ENCODE measurements at regions of chr3 and their contacts with region 1.

Region 1: GRCh38 chr3:124163689-124164088 is 171.8 kb upstream of the ROPN1 start:
- DNase-seq: no peak

Region 2: DNA sequence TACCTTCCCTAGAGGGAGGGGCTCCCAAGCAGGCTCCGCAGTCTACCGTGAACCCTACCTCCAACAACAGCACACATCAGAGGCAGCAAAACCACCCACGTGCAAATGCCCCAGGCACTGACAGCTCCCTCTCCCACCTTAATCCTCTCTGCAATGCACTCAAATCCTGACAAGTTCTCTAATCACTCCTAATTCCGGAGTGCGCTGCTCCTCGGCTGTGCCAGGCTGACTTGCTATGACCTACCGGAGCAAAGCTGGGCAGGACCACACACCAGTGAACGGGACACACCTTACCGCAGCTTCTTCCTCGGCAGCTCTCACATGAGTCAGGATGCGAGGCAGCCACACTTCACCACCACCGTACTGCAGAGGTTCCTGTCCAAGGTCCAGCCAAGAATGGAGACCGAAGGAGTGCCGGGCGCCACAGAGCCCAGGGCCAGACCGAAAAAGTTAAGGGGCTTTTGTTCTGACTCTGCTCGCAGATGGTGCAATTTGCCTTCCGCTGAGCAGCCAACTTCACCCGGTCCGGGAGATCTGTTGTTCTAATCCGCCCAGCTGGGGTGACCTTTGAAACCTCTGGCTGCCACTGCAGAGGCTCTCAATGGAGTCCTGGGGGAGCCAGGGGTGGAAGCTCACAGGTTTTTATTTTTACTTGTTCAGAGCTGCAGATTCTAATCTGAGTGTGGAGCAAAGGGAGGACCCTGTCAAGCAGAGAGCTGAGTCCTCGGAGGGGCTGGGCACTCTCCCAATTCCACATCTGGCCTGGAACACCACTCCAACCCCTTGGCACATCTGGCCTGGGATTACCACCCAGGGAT is 363.9 kb before region 1 on chr3:
- intact Hi-C with region 1: no loop called
- DNase-seq: no peak

Region 3: GRCh38 chr3:124202754-124203153 is 39.1 kb after region 1 on chr3:
- intact Hi-C with region 1: loop called in 1 of 2 experiments (anchors 2 kb)
- DNase-seq: peak; percentile 89

Region 4: DNA sequence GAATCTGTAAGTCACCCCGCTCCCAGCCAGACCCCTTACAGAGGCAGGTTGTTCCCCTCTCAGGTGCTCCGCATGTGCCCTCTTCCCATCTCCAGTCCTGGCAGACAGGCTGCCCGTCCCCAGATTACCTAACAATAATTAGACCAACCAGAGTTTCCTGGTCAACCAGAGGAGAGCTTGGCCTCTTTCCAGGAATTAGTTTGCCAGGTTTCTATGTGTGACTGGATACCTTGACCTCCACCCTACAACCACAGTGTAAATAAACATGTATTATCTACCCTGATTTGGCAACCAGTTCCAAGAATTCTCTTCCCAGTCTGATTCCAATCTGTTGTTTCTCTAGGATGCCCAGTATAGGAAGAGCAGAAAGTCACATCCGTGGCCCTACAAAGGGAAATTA is 388.6 kb after region 1 on chr3:
- intact Hi-C with region 1: no loop called
- DNase-seq: no peak